Activated T-helper 1 cell treated with anti-CD3 and anti-CD28 coated beads, Interleukin-12 subunit alpha, Interleukin-12 subunit beta, Interleukin-2, Interleukin-4 antibody, amounts not matched to agents 30 ng/mL and 10 ng/mL and 1 ng/mL, durations not matched to agents 14 hours and 24 hours and 36 hours (primary cell): ENCODE measurements at regions of chr2 and their contacts with region 1.

Region 1: DNA sequence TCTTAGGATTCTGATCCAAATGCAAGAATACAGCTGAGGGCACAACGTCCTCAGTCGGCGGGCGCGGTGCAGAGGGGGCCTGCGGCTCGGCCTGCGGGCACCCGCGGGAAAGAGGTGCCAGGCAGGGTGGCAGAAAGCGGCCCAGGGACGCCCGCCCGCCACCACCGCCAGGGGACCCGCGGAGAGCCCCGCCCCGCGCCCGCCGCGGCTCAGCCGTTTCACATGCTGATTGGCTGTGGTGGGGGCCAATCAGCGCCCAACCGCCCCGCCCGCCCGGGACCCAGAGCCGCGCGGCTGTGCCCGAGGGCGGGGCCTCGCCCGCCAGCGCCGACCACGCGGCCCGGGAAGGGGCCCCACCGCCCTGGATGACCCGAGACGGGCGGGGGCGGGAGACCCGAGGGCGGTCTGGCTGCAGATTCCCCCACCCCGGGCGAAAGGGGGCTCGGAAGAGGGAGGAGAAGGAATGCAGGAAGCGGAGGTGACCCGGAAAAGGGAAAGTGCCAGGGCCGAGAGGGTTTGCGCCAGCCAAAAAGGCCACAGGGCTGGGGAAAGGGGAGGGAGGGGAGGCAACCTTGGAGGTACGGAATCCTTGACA is 8.0 kb downstream of the IRS1 start:
- DNase-seq: peak; percentile 89
- H3K4me3 Mint-ChIP-seq: peak overlapping the region; percentile 89
- H3K27ac Mint-ChIP-seq: peak overlapping the region; percentile 97
- H3K4me1 Mint-ChIP-seq: peaks cover 61% of the 10 kb centered on the region
- H3K27me3 Mint-ChIP-seq: no peaks in the 10 kb centered on the region

Region 2: DNA sequence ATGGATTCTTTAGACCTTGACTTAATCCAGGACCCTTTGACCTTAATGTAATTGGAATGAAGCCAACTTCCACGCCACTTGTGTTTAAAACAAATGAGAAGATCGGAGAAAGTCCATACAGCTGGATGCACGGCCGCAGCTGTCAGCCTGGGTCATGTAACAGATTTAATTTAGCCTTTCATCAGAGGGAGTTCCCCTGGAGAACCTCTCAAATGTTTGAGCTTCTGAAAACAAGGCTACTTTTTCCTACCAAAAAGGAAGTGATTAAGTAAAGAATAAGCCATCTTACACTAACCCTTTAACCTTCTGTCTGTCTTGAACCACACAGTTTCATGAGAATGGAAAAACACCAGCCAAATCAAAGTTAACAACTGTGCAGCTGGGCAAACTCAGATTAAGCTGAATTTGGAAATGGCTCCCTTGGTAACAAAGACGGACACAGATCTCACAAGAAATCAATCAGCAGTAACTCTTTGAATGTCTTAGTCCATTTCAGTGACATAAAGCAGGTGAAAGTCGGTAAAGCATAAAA is 1852.9 kb before region 1 on chr2:
- intact Hi-C with region 1: loop called (anchors 10 kb)
- DNase-seq: no peak
- H3K4me3 Mint-ChIP-seq: peak overlapping the region; percentile 81
- H3K27ac Mint-ChIP-seq: peak overlapping the region; percentile 91
- H3K4me1 Mint-ChIP-seq: peaks cover 81% of the 10 kb centered on the region
- H3K27me3 Mint-ChIP-seq: no peaks in the 10 kb centered on the region

Region 3: DNA sequence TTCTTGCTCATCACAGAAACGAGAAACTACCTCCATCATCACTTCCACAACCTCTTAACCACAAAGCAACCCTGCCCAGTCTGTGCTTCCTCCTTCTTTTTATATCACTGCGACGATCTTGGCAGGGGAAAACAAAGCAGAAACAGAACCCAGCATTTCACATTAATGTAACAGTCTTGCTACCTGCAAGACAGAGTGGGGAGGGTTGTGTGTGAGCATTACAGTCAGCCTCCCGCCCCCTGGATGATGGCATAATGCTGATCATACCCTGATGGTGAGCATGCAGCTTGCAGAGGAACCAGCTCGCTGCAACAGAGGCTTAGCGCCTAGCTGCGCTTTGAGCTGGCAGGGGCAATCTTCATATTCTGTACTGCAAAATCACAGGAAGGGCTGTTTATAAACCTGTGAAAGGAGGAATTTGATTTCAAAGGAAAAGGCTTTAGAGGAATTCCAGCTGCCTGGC is 368.1 kb before region 1 on chr2:
- intact Hi-C with region 1: loop called (anchors 2 kb)
- DNase-seq: peak; percentile 51
- H3K4me3 Mint-ChIP-seq: peak overlapping the region; percentile 59
- H3K27ac Mint-ChIP-seq: peak overlapping the region; percentile 4
- H3K4me1 Mint-ChIP-seq: peaks cover 21% of the 10 kb centered on the region
- H3K27me3 Mint-ChIP-seq: peaks cover 18% of the 10 kb centered on the region

Region 4: DNA sequence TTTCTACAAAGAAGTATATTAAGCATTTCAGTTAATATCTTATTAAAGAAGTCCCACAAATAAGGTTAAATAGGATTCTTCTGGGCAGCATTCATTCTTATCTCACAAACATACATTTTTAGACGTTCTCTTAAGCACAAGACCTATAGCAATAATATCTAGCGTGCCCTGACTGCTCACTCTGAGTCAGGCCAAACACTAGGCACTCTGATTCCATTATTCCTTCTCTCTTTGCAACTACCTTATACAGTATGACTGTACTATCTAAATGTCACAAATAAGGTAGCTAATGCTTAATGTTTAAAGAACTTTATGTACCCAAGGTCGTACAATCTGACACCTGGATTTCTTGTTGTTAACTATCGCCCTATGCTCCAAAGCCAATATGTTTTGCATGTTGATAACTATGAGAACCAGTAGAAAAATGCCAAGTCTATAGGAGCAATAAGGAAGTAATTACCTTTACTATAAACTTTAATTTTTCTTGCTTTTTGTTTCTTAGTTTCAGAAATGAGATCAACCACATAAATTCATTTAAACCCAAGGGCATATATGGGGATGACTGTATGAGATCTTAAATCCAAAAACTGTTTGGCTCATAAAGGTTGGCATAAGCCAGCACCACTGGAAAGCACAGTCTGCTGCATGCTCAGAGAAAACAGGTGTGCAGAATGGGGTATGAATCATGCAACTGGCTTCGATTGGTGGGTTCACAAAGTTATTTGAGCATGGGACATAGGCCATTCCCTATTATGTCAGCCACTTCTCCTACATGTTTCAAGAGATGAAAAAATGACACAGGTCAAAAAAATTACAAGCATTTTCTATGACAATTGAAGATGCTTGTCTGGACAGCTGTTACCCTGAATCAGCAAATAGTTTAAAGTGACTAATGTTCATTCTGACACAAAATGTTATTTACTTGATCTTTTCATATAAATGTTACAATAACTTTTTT is 344.0 kb before region 1 on chr2:
- intact Hi-C with region 1: no loop called
- DNase-seq: no peak
- H3K4me3 Mint-ChIP-seq: no peak overlapping the region
- H3K27ac Mint-ChIP-seq: no peak overlapping the region
- H3K4me1 Mint-ChIP-seq: no peaks in the 10 kb centered on the region
- H3K27me3 Mint-ChIP-seq: peaks cover 12% of the 10 kb centered on the region

Region 5: DNA sequence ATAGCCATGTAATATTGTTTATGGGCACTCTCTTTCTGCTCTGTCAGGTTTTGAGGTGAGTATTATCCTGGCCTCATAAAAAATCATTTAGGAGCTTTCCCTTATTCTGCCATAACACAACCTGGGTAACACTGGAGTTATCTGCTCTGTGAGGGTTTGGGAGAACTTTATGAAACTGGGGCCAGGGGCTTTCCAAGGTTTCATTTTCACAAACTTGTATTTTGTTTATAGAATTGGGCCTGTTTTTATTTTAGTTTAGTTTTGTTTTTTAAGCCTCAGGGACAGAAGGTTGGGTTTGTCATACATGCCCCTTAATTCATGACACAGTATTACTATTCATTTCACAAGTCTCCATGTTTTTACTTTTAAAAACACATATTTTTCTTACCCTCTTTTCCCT is 75.5 kb before region 1 on chr2:
- intact Hi-C with region 1: loop called (anchors 2 kb)
- DNase-seq: no peak
- H3K4me3 Mint-ChIP-seq: no peak overlapping the region
- H3K27ac Mint-ChIP-seq: peak overlapping the region; percentile 51
- H3K4me1 Mint-ChIP-seq: peaks cover 17% of the 10 kb centered on the region
- H3K27me3 Mint-ChIP-seq: peaks cover 20% of the 10 kb centered on the region

Region 6: DNA sequence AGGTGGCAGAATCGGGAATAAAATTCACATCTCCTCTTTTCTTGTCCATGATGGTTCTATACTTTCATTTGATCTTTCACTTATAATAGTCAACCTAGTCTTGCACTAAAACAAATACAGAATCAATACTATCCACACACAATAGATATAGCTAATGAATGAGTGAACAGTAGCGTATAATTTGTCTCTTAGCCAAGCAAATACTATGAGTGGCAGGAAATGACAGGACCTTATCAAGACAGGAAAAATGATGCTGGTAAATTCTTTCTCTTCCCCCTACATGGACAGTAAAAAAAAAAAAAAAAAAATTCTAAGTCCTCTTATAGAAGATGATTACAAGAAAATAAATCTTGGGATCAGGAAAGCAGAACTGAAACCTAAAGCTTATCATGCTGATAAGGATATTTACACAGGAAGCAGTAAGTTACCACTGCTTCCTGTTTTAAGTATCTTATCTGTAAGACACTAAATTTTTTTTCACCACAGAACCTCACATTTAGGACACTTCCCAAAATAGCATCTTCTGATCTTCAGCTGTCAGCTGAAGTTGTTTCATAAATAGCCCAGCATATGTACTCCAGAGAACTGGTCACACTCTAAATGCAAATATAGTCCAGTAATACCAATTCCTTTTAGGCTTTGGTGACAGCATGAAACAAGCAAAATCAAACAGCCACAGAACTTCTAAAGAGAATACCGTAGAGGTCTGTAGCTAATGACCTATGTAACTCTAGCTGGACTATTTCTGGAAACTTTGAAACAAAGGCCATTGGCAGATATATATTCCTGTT is 19.0 kb before region 1 on chr2:
- intact Hi-C with region 1: loop called (anchors 2 kb)
- DNase-seq: no peak
- H3K4me3 Mint-ChIP-seq: peak overlapping the region; percentile 45
- H3K27ac Mint-ChIP-seq: peak overlapping the region; percentile 31
- H3K4me1 Mint-ChIP-seq: peaks cover 29% of the 10 kb centered on the region
- H3K27me3 Mint-ChIP-seq: no peaks in the 10 kb centered on the region

Region 7: DNA sequence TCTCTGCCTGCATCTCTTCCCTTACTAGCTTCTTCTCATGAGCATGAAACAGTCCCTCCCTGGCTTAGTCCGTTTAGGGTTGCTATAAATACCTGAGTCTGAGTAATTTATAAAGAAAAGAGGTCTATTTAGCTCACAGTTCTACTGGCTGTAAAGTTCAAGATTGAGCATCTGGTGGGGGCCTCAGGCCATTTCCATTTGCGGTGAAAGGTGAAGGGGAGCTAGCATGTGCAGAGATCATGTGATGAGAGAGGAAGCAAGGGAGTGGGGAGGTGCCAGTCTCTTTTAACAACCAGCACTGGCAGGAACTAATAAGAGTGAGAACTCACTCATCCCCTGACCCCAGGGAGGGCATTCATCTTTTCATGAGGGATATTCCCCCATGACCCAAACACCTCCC is 71.0 kb after region 1 on chr2:
- intact Hi-C with region 1: no loop called
- DNase-seq: no peak
- H3K4me3 Mint-ChIP-seq: no peak overlapping the region
- H3K27ac Mint-ChIP-seq: no peak overlapping the region
- H3K4me1 Mint-ChIP-seq: peaks cover 11% of the 10 kb centered on the region
- H3K27me3 Mint-ChIP-seq: no peaks in the 10 kb centered on the region

Region 8: DNA sequence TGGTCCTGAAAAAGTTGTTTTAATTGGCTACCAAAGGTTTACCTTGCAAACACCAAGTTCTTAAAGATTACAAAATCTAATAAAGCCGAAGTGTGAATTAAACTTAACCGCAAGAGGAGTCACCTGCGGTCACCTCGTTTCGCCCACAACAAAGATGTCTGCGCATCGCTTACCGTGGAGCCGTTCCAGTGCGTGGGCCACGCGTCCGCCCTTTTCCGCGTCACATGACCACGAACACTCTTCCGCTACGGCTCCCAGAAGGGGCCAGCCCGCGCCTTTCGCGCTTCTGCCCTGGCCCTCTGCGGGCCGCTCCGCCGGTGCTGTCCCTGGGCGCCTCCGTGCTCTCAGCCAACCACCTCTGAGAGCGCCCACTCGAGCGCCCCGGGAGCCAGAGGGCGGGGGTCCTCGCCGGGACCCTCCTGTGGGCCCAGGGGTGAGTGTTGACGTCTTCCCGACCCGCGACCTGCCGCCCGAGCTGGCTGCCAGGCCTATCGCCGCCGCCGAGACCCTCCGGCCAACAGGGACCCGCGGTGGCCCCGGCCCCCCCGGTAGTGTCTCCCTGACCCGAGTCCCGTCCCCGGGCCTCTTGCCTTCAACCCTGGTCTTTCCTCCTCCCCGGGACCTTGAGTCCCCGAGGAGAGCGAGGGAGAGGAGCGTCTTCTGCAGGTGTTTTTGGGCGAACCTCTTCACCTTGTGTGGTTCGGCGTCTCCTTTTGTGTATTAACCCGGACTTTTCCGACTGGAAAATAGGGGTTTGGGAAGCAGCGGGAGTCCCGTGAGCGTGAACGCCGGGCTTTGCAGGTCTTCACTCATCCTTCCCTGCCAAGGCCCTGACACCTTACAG is 533.6 kb after region 1 on chr2 and contains the start of gene MFF:
- intact Hi-C with region 1: loop called (anchors 5 kb)
- DNase-seq: peak; percentile 91
- H3K4me3 Mint-ChIP-seq: peak within 1 kb of the TSS; percentile 94
- H3K27ac Mint-ChIP-seq: peak within 1 kb of the TSS; percentile 94
- H3K4me1 Mint-ChIP-seq: peaks cover 42% of the 10 kb centered on the region
- H3K27me3 Mint-ChIP-seq: peaks cover 14% of the 10 kb centered on the region
- total RNA-seq, gene MFF: 69.9 and 74.9 TPM in 2 replicates

Region 9: GRCh38 chr2:227597998-227598397 is 806.4 kb after region 1 on chr2:
- intact Hi-C with region 1: no loop called
- DNase-seq: no peak
- H3K4me3 Mint-ChIP-seq: no peak overlapping the region
- H3K27ac Mint-ChIP-seq: no peak overlapping the region
- H3K4me1 Mint-ChIP-seq: peaks cover 5% of the 10 kb centered on the region
- H3K27me3 Mint-ChIP-seq: peaks cover 8% of the 10 kb centered on the region